AG04449 (cell line): ENCODE measurements at regions of chr15 and their contacts with region 1.

Region 1: DNA sequence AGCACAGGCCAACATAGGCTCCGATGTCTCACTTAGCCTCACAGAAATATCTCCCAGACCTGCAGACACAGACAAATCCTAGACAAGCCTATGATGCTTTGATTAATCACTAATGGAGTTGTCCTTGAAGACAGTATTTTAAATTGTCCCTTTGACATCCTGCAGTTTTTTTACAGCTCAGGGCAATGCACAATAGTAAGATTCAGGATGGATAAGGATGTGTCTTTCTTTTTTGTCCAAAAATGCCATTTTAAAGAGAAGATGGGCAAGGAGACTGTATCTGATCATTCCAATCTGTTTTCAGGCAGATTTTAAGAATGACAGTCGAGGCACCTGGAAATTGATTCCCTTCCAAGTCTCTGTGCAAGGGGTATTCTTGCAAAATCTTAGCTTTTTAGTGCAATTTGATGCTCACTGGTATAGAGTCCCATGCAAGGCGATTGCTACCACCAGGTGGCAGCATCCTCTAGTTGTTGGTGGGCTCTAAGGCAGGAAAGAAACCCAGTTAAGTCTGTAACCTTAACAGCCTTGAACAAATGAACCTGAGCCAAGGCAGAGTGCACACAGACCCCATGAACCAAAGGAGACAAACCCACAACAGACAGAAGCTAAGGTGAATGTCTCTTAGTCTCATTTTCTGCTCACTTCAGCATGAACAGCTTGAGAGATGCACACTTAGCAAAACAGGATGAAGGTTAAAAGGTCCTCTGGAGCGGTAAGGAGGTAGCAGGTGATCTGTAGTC is 51.2 kb upstream of the MINAR1 start:
- DNase-seq: no peak
- H3K4me3 ChIP-seq: no peak overlapping the region
- CTCF ChIP-seq: peak; percentile 85

Region 2: GRCh38 chr15:79296583-79296982 is 84.3 kb before region 1 on chr15:
- CTCF ChIA-PET with region 1: no interaction called
- POLR2A ChIA-PET with region 1: no interaction called
- DNase-seq: no peak
- H3K4me3 ChIP-seq: no peak overlapping the region
- CTCF ChIP-seq: no peak

Region 3: DNA sequence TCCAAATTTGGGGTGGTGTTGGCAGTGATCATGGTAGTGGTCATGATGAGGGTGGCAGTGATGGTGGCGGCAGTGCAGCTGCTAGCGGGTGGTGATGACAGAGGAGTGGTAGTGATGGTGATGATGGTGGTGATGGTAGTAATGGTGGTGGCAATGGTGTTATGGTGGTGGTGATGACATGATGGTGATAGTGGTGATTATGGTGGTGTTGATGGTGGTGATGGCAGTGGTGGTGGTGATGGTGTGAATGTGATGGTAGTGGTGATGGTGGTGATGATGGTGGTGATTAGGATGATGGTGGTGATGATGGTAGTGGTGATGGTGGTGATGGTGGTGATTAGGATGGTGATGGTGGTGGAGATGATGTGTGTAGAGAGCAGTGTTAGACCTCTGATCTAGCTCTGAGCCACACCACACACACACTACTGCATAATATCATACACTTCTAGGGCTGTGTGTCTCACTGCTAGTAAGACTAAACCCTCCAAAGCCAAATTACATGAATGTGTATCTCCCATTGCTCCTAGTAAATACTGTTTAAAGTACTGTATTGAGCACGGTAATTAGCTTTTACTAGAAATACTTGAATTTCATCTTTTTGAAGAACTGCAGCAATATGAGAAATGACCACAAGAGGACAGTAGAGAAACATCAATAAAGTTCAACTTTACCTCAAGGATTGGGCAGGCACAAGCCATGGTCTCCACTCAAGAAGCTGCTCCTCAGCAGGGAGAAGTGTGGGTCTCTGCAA is 41.2 kb before region 1 on chr15:
- CTCF ChIA-PET with region 1: interaction called, 37 read pairs
- POLR2A ChIA-PET with region 1: no interaction called
- DNase-seq: peak; percentile 21
- H3K4me3 ChIP-seq: no peak overlapping the region
- CTCF ChIP-seq: peak; percentile 74

Region 4: GRCh38 chr15:79357566-79357965 is 23.4 kb before region 1 on chr15:
- CTCF ChIA-PET with region 1: interaction called, 48 read pairs
- POLR2A ChIA-PET with region 1: no interaction called
- DNase-seq: no peak
- H3K4me3 ChIP-seq: no peak overlapping the region
- CTCF ChIP-seq: no peak

Region 5: DNA sequence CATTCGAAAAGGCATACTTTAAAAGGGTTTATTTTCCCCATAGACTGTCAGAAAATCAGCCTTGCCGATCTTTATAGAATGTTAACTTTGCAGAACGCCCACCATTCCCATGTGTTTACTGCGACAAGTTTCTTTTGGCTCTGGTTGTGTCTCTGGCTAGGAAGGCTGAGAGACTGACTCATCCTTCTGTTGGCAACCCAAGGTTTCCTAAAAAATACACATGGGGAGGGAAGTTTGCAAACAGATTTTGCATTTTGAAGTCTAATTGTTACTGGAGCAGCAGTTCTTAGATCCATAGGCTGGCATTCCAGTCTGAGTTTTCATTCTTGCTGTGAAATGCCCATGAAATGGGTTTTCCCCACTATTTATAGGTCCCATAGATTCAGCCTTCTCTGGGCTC is 13.3 kb after region 1 on chr15:
- CTCF ChIA-PET with region 1: interaction called, 73 read pairs
- POLR2A ChIA-PET with region 1: no interaction called
- DNase-seq: no peak
- H3K4me3 ChIP-seq: no peak overlapping the region
- CTCF ChIP-seq: no peak

Region 6: GRCh38 chr15:79431636-79432344 is 50.9 kb after region 1 on chr15 and contains the start of gene MINAR1:
- CTCF ChIA-PET with region 1: interaction called, 62 read pairs
- POLR2A ChIA-PET with region 1: no interaction called
- DNase-seq: no peak
- H3K4me3 ChIP-seq: peak within 1 kb of the TSS; percentile 64
- CTCF ChIP-seq: peak; percentile 26

Region 7: GRCh38 chr15:79844221-79844620 is 463.3 kb after region 1 on chr15:
- CTCF ChIA-PET with region 1: interaction called, 33 read pairs
- POLR2A ChIA-PET with region 1: no interaction called
- DNase-seq: no peak
- H3K4me3 ChIP-seq: no peak overlapping the region
- CTCF ChIP-seq: no peak

Region 8: DNA sequence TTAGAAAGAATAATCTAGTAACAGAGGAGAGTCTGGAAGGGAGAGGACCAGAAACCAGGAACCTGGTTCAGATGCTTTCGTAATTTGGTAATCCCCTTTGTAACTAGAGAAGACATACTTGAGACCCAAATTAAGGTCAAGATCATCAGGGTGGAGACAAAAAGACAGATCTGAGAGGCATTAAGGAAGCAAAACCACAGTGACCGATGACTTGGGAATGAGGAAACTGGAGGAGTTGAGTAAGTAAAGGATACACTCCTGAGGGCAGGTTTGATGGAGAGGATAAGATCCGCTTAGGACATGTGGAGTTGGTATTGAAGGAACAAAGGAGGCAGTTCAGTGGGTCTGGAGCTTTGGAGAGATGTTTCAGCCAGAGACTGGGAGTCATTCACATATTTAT is 613.7 kb after region 1 on chr15:
- CTCF ChIA-PET with region 1: interaction called, 31 read pairs
- POLR2A ChIA-PET with region 1: no interaction called
- DNase-seq: no peak
- H3K4me3 ChIP-seq: no peak overlapping the region
- CTCF ChIP-seq: no peak